GM10248 (cell line): ENCODE measurements at regions of chr3 and their contacts with region 1.

Region 1: DNA sequence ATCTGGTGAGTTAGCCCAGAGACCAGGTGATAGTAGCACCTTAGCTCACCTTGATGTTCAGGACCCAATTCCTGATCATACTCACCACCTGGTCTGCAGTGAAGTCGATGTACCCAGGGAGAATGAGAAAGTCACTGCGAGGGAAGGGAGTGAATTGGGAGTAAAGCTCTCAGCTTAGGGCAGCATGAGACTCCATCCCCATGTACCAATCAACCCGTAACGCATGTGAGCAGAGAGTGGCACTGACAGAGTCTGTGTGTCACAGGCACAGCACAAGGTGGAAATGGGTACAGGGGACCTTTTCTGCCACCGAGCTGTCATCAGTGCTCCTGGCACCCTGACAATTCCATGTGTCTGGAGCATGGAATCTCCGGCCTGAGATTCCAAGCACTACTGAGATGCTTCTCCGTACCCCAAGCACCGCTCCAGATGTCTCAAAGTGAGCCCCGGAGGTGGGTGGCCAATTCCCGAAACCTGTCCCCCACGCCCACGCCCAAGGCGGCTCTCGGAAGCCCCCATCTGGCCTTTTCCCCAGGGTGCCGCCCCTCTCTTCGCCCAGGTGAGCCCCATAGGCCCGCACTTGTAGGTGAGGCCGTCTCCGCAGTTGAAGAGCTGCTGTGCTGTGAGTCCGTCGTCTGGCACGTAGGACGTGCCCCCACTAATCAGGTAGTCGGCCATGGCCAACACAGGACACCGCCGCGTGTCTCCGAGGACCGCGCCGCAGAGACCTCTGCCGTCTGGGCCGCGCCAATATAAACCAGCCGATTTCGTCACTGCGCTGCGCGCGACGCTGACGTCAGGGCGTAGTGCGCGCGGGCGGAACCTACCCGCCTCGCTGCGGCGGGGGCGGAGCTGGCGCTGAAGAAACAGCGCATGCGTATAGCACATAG is at the start of gene IMPDH2:
- DNase-seq: peak; percentile 91
- CTCF ChIP-seq: peak; percentile 16

Region 2: GRCh38 chr3:49007068-49007770 is 21.7 kb before region 1 on chr3 and contains the start of gene WDR6:
- CTCF ChIA-PET with region 1: interaction called, 131 read pairs
- POLR2A ChIA-PET with region 1: interaction called, 20 read pairs
- DNase-seq: peak; percentile 98
- CTCF ChIP-seq: peak; percentile 50

Region 3: GRCh38 chr3:49013755-49014628 is 14.9 kb before region 1 on chr3:
- CTCF ChIA-PET with region 1: interaction called, 131 read pairs
- POLR2A ChIA-PET with region 1: interaction called, 14 read pairs
- DNase-seq: peak; percentile 52
- CTCF ChIP-seq: peak; percentile 71